Pancreas (tissue), 10 donors: ENCODE measurements at regions of chr12 and their contacts with region 1.

Region 1: GRCh38 chr12:118372541-118373495 is at the start of gene TAOK3:
- DNase-seq: peak; percentile 95 to 99 (median 98)
- ATAC-seq: peak; percentile 89 to 94 (median 90)
- H3K4me3 ChIP-seq: peak within 1 kb of the TSS; percentile 68 to 93 (median 87)
- H3K27ac ChIP-seq: peak within 1 kb of the TSS; percentile 31 to 94 (median 74)
- H3K4me1 ChIP-seq: peaks cover 7 to 12% (median 8%) of the 10 kb centered on the region in 3 donors
- H3K27me3 ChIP-seq: no peaks in the 10 kb centered on the region
- CTCF ChIP-seq: no peak
- total RNA-seq, gene TAOK3: 8.9 to 21.0 (median 12.5) TPM

Region 2: DNA sequence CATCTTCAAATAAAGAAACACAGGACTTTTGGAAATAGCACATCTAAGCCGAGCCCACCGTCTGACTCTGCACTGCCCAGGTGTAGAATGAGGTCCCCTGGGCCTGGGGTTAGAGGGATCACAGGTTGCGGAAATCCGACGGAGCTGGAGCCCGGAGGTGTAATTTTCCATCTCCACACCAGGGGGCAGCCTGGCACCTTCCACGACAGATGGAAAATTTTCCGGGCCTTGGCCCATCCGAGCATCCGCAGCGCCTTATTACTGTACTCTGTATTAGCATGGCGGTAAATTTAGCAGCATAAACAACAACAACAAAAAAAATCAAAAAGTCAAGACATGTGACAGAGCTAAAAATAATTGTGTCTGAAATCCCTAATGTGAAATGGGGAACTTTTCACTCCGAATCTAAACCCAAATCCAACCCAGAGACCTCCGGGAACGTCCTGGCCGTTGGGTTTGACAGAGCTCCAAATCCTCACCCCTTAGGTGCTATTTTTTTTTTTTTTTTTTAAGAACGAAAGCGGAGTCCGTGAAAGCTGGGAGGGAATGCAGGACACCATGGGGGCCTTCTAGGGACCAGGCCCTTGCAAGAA is 497.9 kb before region 1 on chr12:
- intact Hi-C with region 1: loop called in 1 of 3 experiments (anchors 10 kb)
- DNase-seq: peak; percentile 57 to 90 (median 78)
- ATAC-seq: peak; percentile 85 to 99 (median 94)
- H3K4me3 ChIP-seq: no peak overlapping the region
- H3K27ac ChIP-seq: no peak overlapping the region
- H3K4me1 ChIP-seq: no peaks in the 10 kb centered on the region
- H3K27me3 ChIP-seq: no peaks in the 10 kb centered on the region
- CTCF ChIP-seq: peak; percentile 80 to 91 (median 88)

Region 3: GRCh38 chr12:118120579-118121363 is 252.0 kb before region 1 on chr12:
- intact Hi-C with region 1: loop called in 1 of 3 experiments (anchors 10 kb)
- DNase-seq: peak; percentile 68 to 86 (median 78)
- ATAC-seq: peak; percentile 75 to 89 (median 88)
- H3K4me3 ChIP-seq: no peak overlapping the region
- H3K27ac ChIP-seq: peak overlapping the region in 3 of 4 donors; percentile 39 to 77 (median 65)
- H3K4me1 ChIP-seq: peaks cover 13 to 28% (median 13%) of the 10 kb centered on the region in 3 donors
- H3K27me3 ChIP-seq: no peaks in the 10 kb centered on the region
- CTCF ChIP-seq: peak; percentile 53 to 73 (median 68)

Region 4: GRCh38 chr12:118183705-118184104 is 189.1 kb before region 1 on chr12:
- intact Hi-C with region 1: loop called in 2 of 3 experiments (anchors 5 to 10 kb)
- DNase-seq: no peak
- ATAC-seq: peak in 3 of 4 donors; percentile 18 to 30 (median 27)
- H3K4me3 ChIP-seq: no peak overlapping the region
- H3K27ac ChIP-seq: peak overlapping the region; percentile 13 to 77 (median 73)
- H3K4me1 ChIP-seq: peaks cover 13 to 38% (median 35%) of the 10 kb centered on the region in 3 donors
- H3K27me3 ChIP-seq: no peaks in the 10 kb centered on the region
- CTCF ChIP-seq: no peak

Region 5: GRCh38 chr12:118189741-118190191 is 183.1 kb before region 1 on chr12:
- intact Hi-C with region 1: loop called in 2 of 3 experiments (anchors 5 to 10 kb)
- DNase-seq: peak in 5 of 6 donors; percentile 19 to 63 (median 22)
- ATAC-seq: peak; percentile 64 to 80 (median 76)
- H3K4me3 ChIP-seq: peak overlapping the region in 2 of 4 donors; percentile 21 to 37
- H3K27ac ChIP-seq: peak overlapping the region in 3 of 4 donors; percentile 40 to 84 (median 82)
- H3K4me1 ChIP-seq: peaks cover 0 to 39% (median 24%) of the 10 kb centered on the region in 3 donors
- H3K27me3 ChIP-seq: no peaks in the 10 kb centered on the region
- CTCF ChIP-seq: no peak